Activated CD4-positive, alpha-beta T cell treated with anti-CD3 and anti-CD28 coated beads, Interleukin-2, amount 10 ng/mL, durations not matched to agents 24 days and 14 days (primary cell): ENCODE measurements at regions of chr10 and their contacts with region 1.

Region 1: GRCh38 chr10:62816331-62817120 is at the start of gene EGR2:
- DNase-seq: peak; percentile 98
- H3K4me3 Mint-ChIP-seq: peak within 1 kb of the TSS; percentile 97
- H3K27ac Mint-ChIP-seq: peak within 1 kb of the TSS; percentile 100
- H3K4me1 Mint-ChIP-seq: peaks cover 50% of the 10 kb centered on the region
- H3K27me3 Mint-ChIP-seq: peaks cover 30% of the 10 kb centered on the region
- total RNA-seq, gene EGR2: 178 and 201 TPM in 2 replicates

Region 2: DNA sequence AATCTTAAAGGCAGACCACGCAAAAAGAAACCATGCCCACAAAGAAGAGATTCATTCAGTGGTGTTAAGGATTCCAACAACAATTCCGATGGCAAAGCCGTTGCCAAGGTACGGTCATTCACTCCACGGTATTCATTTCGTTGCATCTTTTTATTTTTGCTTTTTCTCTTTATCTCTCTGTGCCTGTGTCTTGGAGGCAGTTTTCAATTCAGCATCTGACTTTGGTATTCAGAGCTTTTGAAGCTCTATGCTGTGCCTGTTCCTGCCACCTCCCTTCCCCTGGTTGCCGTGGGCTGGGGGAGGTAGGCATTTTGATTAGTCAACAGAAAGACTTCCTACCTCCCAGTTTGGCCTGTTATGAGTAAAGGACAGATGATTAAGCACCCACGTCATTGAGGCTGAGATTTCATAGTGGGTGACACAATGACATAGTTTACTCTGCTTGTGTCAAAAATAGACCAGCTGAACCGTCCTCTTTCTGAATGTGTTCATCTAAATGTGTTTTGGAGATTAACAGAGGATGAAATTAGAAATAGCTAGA is 765.6 kb before region 1 on chr10:
- intact Hi-C with region 1: loop called (anchors 1 kb)
- DNase-seq: peak; percentile 93
- H3K4me3 Mint-ChIP-seq: peak overlapping the region; percentile 97
- H3K27ac Mint-ChIP-seq: peak overlapping the region; percentile 99
- H3K4me1 Mint-ChIP-seq: peaks cover 79% of the 10 kb centered on the region
- H3K27me3 Mint-ChIP-seq: no peaks in the 10 kb centered on the region

Region 3: DNA sequence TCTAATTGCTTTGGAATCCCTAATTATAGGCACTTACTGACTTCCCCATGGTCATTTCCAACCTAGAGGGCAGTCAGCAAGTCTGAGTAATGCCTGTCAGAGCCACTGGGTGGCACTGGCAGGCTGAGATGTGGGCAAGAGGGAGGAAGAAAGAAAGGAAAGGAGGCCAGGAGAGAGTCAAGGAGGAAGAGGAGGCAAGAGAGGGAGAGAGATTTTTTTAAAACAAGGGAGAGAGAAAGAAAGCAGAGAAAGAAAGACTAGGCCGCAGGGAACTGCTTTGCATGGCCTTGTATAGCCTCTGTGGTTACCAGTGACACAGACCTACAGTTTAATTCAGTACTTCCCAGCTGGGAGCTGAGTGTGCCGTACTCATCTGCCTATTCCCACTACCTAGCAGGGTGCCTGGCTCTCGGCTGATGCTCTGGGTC is 222.4 kb before region 1 on chr10:
- intact Hi-C with region 1: loop called (anchors 1 kb)
- DNase-seq: peak; percentile 86
- H3K4me3 Mint-ChIP-seq: no peak overlapping the region
- H3K27ac Mint-ChIP-seq: no peak overlapping the region
- H3K4me1 Mint-ChIP-seq: peaks cover 3% of the 10 kb centered on the region
- H3K27me3 Mint-ChIP-seq: peaks cover 22% of the 10 kb centered on the region

Region 4: DNA sequence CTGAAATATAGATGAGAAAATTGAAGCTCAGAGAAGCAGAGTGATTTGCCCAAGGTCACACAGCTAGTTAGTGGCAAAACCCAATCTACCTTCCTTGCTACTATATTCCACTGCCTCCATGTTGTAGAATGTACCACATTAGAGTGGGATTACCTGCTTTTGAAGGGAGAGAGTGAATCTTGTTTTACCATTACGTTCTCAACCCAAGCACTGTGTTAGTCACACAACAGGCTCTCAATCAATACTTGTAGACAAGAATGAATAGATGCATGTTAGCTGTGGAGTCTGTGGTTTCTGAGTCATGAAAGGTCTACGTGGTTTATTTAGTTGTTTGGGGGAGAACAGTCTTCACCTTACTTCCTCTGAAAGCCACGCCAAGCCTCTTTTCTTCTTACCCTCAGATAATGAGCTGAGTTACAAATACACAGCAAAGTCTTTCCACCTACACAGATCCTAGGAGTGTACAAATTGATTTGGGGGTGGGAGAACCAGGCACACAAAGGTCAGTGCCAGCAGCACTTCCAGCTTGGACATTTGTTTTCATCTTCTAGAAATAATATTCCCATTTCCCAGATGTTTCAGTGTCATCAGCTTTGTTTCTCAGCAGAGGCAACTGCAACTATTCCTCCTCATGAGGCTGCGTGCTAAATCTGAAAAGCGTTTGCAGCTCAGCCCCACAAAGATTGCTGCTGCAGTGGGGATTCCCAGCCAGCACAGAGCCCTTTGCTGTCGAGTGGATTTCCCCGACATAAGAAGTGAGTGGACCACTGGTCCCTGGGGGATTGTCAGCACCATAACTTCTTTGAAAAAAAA is 83.5 kb before region 1 on chr10:
- intact Hi-C with region 1: loop called (anchors 1 kb)
- DNase-seq: peak; percentile 91
- H3K4me3 Mint-ChIP-seq: no peak overlapping the region
- H3K27ac Mint-ChIP-seq: no peak overlapping the region
- H3K4me1 Mint-ChIP-seq: peaks cover 43% of the 10 kb centered on the region
- H3K27me3 Mint-ChIP-seq: peaks cover 1% of the 10 kb centered on the region

Region 5: GRCh38 chr10:62851442-62851841 is 34.9 kb after region 1 on chr10:
- intact Hi-C with region 1: loop called (anchors 1 kb)
- DNase-seq: peak; percentile 68
- H3K4me3 Mint-ChIP-seq: no peak overlapping the region
- H3K27ac Mint-ChIP-seq: peak overlapping the region; percentile 3
- H3K4me1 Mint-ChIP-seq: peaks cover 52% of the 10 kb centered on the region
- H3K27me3 Mint-ChIP-seq: no peaks in the 10 kb centered on the region

Region 6: DNA sequence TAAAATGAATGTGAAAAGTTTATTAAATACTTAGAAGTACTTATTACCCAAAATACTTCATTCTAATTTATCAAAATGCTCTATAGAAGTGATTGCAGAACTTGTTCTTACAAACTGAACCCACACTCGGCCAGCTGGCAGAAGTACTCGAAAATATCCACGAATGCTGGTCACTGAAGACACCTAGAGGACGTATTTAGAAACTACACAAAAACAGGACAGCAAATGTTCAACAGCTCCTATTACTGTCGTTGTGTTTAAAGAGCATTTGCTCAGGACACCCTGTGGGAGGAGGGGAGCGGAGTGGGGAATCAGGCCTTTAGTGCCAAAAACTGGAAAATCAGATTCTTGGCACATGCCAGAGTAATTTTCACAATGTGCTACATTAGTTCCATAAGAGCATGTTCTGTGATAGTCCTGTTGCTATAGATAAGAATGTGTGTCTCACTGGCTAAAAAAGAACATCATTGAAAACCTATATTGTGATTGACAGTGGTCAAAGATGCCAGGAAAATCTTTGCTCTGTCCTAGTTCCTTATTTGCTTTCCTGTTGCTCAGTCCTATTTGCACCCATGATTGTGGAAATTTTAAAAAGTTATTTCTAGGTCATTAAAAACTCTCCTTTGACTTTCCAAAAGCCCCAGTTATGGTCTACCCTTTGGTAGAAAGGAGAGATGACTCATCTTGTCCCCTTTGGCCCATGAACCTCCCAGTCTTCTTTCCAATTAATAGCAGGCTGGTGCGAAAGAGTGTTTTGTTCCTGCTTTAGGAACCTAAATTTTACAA is 267.6 kb after region 1 on chr10:
- intact Hi-C with region 1: loop called (anchors 1 kb)
- DNase-seq: peak; percentile 79
- H3K4me3 Mint-ChIP-seq: no peak overlapping the region
- H3K27ac Mint-ChIP-seq: no peak overlapping the region
- H3K4me1 Mint-ChIP-seq: no peaks in the 10 kb centered on the region
- H3K27me3 Mint-ChIP-seq: peaks cover 33% of the 10 kb centered on the region

Region 7: DNA sequence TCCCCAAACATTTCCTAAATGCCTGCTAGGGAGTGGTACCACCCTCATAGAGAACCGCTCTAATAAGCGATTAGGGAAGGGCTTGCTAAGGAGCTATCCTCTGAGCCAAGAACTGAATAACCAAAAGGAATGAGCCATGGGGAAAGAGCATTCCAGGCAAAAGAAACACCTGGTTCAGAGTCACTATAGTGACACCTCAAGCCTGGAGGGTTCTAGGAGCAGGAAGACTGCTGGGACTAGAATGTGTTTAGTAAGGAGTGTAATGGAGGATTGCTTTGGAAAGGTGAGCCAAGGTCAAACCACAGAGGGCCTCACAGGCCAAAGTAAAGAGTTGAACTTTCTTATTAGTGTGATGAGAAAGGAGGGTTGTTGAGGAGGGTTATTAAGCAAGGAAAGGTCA is 277.9 kb after region 1 on chr10:
- intact Hi-C with region 1: no loop called
- DNase-seq: no peak
- H3K4me3 Mint-ChIP-seq: no peak overlapping the region
- H3K27ac Mint-ChIP-seq: no peak overlapping the region
- H3K4me1 Mint-ChIP-seq: no peaks in the 10 kb centered on the region
- H3K27me3 Mint-ChIP-seq: peaks cover 11% of the 10 kb centered on the region